OCI-LY7 (cell line): ENCODE measurements at regions of chr16 and their contacts with region 1.

Region 1: DNA sequence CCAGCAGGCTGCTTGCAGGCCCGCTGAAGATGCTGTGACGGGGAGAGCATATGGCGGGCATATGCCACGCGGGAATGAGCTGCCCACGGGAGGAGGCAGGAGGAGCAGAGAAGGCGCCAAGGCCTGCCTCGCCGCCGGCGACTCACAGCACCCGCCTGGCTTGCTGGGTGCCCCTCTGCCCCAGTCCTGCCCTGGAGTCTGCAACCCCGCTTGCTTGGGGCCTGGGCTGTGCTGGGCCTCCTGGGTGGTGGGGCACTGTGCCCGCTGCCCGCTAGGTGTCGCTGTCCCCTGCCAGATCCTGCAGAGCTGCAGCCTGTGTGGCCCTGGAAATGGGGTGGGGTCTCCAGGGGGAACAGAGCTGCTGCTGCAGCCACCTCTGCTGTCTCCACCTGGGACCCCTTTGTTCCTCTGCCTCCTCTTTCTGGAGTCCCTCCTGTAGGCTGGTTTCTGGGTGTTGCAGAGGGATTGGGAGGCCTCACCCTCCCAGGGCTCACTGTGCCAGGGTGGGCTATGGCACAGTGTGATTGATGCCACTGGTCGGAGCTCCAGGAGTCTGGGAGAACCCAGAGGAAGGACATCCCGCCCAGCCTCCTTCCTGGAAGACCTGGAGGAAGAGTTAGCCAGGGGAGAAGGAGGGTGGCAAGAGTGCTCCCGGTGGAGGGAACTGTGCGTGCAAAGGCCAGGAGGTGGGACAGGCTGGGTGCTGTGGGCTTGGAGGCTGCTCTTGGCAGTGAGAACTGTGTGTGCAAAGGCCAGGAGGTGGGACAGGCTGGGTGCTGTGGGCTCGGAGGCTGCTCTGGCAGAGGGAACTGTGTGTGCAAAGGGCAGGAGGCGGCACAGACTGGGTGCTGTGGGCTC is 141.0 kb upstream of the CIBAR2 start:
- DNase-seq: peak; percentile 81
- H3K4me3 ChIP-seq: no peak overlapping the region
- H3K27ac ChIP-seq: peak overlapping the region; percentile 68
- H3K4me1 ChIP-seq: peaks cover 34% of the 10 kb centered on the region
- CTCF ChIP-seq: peak; percentile 97

Region 2: DNA sequence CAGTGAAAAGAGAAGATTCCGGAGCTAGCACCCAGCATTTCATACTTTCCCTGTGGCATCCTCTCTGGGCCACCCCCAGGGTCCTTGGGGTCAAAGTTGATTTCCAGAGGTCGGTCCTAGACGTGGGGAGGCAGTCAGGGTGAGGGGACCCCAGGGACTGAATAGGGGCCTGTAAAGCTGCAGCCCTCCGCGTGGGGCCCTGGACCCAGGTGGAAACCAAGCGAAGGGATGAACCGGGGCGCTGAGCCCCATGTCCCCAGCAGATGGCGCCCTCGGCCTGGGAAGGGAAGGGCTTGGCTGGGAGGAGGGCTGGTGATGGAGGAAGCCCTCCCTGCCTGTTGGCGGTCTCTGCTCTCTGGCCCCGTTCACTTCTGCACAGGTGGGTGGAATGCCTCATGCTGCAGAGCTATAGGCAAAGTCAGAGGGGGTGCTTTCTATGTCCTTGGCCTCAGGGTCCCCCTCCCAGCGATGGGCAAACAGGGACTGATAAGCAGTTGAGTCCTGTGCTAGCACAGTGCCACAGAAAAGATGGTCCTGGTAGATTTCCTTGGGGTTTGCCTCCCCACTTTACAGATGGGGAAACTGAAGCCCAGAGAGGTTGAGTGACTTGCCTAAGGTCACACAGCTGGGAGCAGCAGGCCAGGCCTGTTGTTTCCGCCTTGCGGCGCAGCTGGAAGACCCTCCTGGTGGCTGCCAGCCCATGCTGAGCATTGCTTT is 22.4 kb after region 1 on chr16:
- CTCF ChIA-PET with region 1: interaction called, 4 read pairs
- POLR2A ChIA-PET with region 1: interaction called, 3 read pairs
- intact Hi-C with region 1: loop called (anchors 1 kb)
- DNase-seq: peak; percentile 80
- H3K4me3 ChIP-seq: no peak overlapping the region
- H3K27ac ChIP-seq: no peak overlapping the region
- H3K4me1 ChIP-seq: peaks cover 3% of the 10 kb centered on the region
- CTCF ChIP-seq: peak; percentile 92

Region 3: GRCh38 chr16:85296859-85297660 is 43.7 kb after region 1 on chr16:
- CTCF ChIA-PET with region 1: interaction called, 3 read pairs
- POLR2A ChIA-PET with region 1: interaction called, 3 read pairs
- intact Hi-C with region 1: loop called (anchors 2 kb)
- DNase-seq: peak; percentile 72
- H3K4me3 ChIP-seq: no peak overlapping the region
- H3K27ac ChIP-seq: no peak overlapping the region
- H3K4me1 ChIP-seq: no peaks in the 10 kb centered on the region
- CTCF ChIP-seq: peak; percentile 87

Region 4: GRCh38 chr16:85330694-85331188 is 77.4 kb after region 1 on chr16:
- CTCF ChIA-PET with region 1: no interaction called
- POLR2A ChIA-PET with region 1: no interaction called
- intact Hi-C with region 1: loop called (anchors 2 kb)
- DNase-seq: peak; percentile 87
- H3K4me3 ChIP-seq: no peak overlapping the region
- H3K27ac ChIP-seq: no peak overlapping the region
- H3K4me1 ChIP-seq: peaks cover 55% of the 10 kb centered on the region
- CTCF ChIP-seq: peak; percentile 80

Region 5: GRCh38 chr16:85428168-85428898 is 175.0 kb after region 1 on chr16:
- CTCF ChIA-PET with region 1: interaction called, 5 read pairs
- POLR2A ChIA-PET with region 1: no interaction called
- intact Hi-C with region 1: loop called (anchors 5 kb)
- DNase-seq: peak; percentile 64
- H3K4me3 ChIP-seq: no peak overlapping the region
- H3K27ac ChIP-seq: no peak overlapping the region
- H3K4me1 ChIP-seq: no peaks in the 10 kb centered on the region
- CTCF ChIP-seq: peak; percentile 72

Region 6: GRCh38 chr16:85448557-85449197 is 195.4 kb after region 1 on chr16:
- CTCF ChIA-PET with region 1: no interaction called
- POLR2A ChIA-PET with region 1: interaction called, 3 read pairs
- intact Hi-C with region 1: loop called (anchors 1 kb)
- DNase-seq: peak; percentile 87
- H3K4me3 ChIP-seq: peak overlapping the region; percentile 18
- H3K27ac ChIP-seq: peak overlapping the region; percentile 86
- H3K4me1 ChIP-seq: peaks cover 61% of the 10 kb centered on the region
- CTCF ChIP-seq: no peak

Region 7: GRCh38 chr16:85583491-85584181 is 330.3 kb after region 1 on chr16:
- CTCF ChIA-PET with region 1: no interaction called
- POLR2A ChIA-PET with region 1: no interaction called
- intact Hi-C with region 1: no loop called
- DNase-seq: no peak
- H3K4me3 ChIP-seq: no peak overlapping the region
- H3K27ac ChIP-seq: no peak overlapping the region
- H3K4me1 ChIP-seq: no peaks in the 10 kb centered on the region
- CTCF ChIP-seq: no peak